IMR-90 (cell line): ENCODE measurements at regions of chr5 and their contacts with region 1.

Region 1: GRCh38 chr5:136062366-136063274 is 33.8 kb downstream of the TGFBI start:
- DNase-seq: peak; percentile 45
- ATAC-seq: no peak
- H3K4me3 ChIP-seq: no peak overlapping the region
- H3K27ac ChIP-seq: peak overlapping the region; percentile 18; the same call in 1 of the 2 replicates
- H3K4me1 ChIP-seq: peaks cover 18% of the 10 kb centered on the region
- H3K27me3 ChIP-seq: no peaks in the 10 kb centered on the region
- CTCF ChIP-seq: peak; percentile 54
- POLR2A ChIP-seq: no peak
- RAD21 ChIP-seq: peak; percentile 74

Region 2: GRCh38 chr5:136020383-136021015 is 42.1 kb before region 1 on chr5:
- CTCF ChIA-PET with region 1: interaction called, 5 read pairs
- POLR2A ChIA-PET with region 1: no interaction called
- dilution Hi-C with region 1: no loop called
- in situ Hi-C with region 1: no loop called
- intact Hi-C with region 1: loop called (anchors 1 kb)
- DNase-seq: peak; percentile 99
- ATAC-seq: peak; percentile 66
- H3K4me3 ChIP-seq: no peak overlapping the region
- H3K27ac ChIP-seq: peak overlapping the region; percentile 97; the same call in 1 of the 2 replicates
- H3K4me1 ChIP-seq: peaks cover 51% of the 10 kb centered on the region
- H3K27me3 ChIP-seq: no peaks in the 10 kb centered on the region
- CTCF ChIP-seq: no peak
- POLR2A ChIP-seq: 0 out of 2 replicates have a peak, but pooled peaks have one; percentile 58
- RAD21 ChIP-seq: no peak

Region 3: DNA sequence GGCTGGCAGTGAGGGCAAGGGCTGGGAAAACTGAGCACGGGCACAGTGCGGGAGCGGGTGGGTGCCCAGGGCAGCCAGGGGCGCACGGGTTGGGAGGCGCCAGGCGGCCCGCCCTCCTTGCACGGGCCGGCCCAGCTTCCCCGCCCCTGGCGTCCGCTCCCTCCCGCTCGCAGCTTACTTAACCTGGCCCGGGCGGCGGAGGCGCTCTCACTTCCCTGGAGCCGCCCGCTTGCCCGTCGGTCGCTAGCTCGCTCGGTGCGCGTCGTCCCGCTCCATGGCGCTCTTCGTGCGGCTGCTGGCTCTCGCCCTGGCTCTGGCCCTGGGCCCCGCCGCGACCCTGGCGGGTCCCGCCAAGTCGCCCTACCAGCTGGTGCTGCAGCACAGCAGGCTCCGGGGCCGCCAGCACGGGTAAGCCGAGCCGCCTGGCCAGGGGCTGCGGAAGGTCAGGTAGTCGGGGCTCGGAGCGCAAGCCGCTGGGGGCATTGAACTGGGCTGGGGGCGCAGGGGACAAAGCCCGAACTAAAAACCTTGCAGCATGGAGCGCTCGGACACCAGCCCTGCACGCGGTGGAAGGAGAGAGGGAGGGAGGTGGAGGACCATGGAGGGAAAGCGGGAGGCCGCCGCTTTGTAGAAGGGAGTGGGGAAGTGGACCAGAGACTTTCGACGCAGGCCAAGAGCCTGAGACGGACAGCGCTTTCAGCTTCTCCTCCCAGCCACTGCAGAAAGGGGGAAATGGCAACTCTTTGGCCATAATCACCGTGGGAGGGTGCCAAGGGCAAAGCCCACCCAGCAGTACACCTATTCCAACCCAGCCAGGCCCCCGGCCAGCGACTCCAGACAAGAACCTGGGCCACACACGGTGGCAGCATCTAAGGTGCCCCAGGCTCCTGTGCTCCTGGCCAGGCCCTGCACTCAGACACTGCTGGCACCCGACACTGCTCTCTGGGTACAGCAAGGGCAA is 33.6 kb before region 1 on chr5 and contains the start of gene TGFBI:
- CTCF ChIA-PET with region 1: no interaction called
- POLR2A ChIA-PET with region 1: interaction called, 6 read pairs
- dilution Hi-C with region 1: no loop called
- in situ Hi-C with region 1: no loop called
- intact Hi-C with region 1: loop called (anchors 2 kb)
- DNase-seq: peak; percentile 67
- ATAC-seq: peak; percentile 90
- H3K4me3 ChIP-seq: peak within 1 kb of the TSS; percentile 92
- H3K27ac ChIP-seq: peak within 1 kb of the TSS; percentile 89
- H3K4me1 ChIP-seq: peaks cover 28% of the 10 kb centered on the region
- H3K27me3 ChIP-seq: no peaks in the 10 kb centered on the region
- CTCF ChIP-seq: peak; percentile 17; the same call in 1 of the 2 replicates
- POLR2A ChIP-seq: peak; percentile 96
- RAD21 ChIP-seq: no peak; the same call in 1 of the 2 replicates
- total RNA-seq, gene TGFBI: 483 and 618 TPM in 2 replicates

Region 4: DNA sequence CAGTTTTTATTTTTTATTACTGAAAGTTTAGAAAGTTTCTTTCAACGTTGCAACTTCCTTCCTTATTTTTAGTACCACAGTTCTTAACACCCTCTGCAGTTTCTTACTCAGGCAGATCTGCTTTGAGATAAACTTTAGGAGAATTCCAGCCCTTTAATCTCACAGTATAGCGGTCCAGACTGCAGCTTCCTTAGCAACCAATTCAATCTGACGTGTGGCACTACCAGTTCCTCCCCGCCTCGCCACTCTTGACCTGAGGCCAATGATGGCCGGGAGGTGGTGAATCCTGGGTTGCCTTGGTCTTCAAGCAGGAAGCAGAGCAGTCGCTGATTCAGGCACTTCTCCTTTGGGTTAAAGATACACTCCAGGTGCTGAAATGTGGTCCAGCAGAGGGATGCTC is 637.0 kb after region 1 on chr5:
- CTCF ChIA-PET with region 1: no interaction called
- POLR2A ChIA-PET with region 1: no interaction called
- dilution Hi-C with region 1: no loop called
- in situ Hi-C with region 1: no loop called
- intact Hi-C with region 1: no loop called
- DNase-seq: no peak
- ATAC-seq: no peak
- H3K4me3 ChIP-seq: no peak overlapping the region
- H3K27ac ChIP-seq: no peak overlapping the region
- H3K4me1 ChIP-seq: no peaks in the 10 kb centered on the region
- H3K27me3 ChIP-seq: no peaks in the 10 kb centered on the region
- CTCF ChIP-seq: no peak
- POLR2A ChIP-seq: no peak
- RAD21 ChIP-seq: no peak